ENCODE measurements at regions of chr14 and their contacts with region 1.

Region 1: DNA sequence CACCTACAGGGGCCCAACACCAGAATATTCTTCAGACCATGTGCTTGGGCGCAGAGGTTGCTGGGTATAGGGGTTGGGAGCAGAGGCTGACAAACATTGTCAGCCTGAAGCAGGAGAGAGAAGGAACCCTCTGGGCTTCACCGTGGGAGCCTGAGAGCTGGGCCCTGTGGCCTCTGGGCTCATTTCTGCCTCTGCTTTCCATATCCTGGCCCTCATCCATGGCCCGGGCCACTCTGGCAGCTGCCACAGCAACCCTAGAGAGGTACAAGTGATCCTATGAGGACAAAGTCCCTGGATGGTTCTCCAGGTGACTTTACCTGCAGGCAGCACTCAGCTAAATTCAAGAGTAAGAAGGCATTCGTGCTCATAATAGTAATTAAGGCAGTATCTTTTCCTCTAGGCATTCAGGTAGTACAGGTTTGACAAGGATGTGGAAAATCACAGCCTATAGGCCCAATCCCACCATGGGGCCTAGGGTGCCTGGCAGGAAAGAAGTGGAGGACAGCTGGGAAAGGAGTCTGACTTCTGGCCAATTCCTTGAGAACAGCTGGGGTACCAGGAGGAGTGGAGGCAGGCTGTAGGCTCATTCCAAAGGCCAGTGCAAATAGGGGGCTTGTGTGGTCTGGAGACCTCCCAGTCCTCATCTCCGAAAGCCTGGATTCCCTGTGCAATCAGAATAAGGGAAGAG is 3.6 kb upstream of the TTC7B start:
- DNase-seq: no peak
- H3K4me3 ChIP-seq: no peak overlapping the region
- H3K27ac ChIP-seq: no peak overlapping the region
- H3K4me1 ChIP-seq: peaks cover 0 to 10% of the 10 kb centered on the region in 2 donors
- H3K27me3 ChIP-seq: no peaks in the 10 kb centered on the region
- CTCF ChIP-seq: no peak
- POLR2A ChIP-seq: no peak

Region 2: GRCh38 chr14:90836692-90837063 is 16.8 kb after region 1 on chr14:
- intact Hi-C with region 1: loop called (anchors 1 kb)
- DNase-seq: no peak
- H3K4me3 ChIP-seq: no peak overlapping the region
- H3K27ac ChIP-seq: no peak overlapping the region
- H3K4me1 ChIP-seq: no peaks in the 10 kb centered on the region
- H3K27me3 ChIP-seq: no peaks in the 10 kb centered on the region
- CTCF ChIP-seq: no peak
- POLR2A ChIP-seq: no peak

Measured in breast epithelium (tissue), 4 donors.